ENCODE measurements at regions of chr20 and their contacts with region 1.

Region 1: DNA sequence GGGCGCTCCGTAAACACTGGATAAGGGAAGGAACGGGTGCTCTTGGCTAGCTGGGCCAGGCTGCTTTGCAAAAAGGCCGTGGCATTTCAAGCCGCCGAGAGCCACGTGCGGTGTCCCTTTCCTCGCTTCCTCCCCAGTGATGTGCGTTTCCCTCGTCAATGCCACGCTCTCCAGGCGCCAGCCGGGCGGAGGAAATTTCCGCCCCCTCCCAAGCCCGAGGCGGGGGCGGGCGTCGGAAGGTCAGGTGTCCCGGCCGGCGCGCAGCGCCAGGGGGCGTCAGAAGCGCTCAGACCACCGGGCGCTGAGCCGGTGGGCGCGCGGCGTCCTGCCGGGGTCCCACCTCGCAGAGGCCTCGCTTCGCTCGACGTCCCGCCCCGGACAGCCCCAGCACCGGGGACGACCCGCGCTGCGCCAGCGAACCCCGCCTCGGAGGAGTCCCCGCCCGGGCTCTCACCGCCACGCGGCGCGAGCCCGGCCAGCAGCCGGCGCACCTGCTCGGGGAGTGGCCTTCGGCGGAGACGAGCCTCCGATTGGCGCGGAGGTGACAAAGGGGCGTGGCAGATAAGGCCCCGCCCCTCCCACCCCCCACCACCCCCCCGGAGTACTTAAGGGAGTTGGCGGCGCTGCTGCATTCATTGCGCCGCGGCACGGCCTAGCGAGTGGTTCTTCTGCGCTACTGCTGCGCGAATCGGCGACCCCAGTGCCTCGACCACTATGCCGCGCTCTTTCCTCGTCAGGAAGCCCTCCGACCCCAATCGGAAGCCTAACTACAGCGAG is at the start of gene SNAI1:
- DNase-seq: peak; percentile 98
- H3K4me3 ChIP-seq: peak within 1 kb of the TSS; percentile 76 to 80
- H3K27ac ChIP-seq: peak within 1 kb of the TSS; percentile 43 to 76; a peak in 3 of 4 replicates
- H3K4me1 ChIP-seq: peaks cover 11 to 40% of the 10 kb centered on the region in 2 experiments; a peak in 3 of 4 replicates
- H3K27me3 ChIP-seq: no peaks in the 10 kb centered on the region
- CTCF ChIP-seq: peak; percentile 61
- EP300 ChIP-seq: no peak
- RAD21 ChIP-seq: peak; percentile 46
- polyA plus RNA-seq, gene SNAI1: 3.7 and 6.2 TPM in 2 replicates

Region 2: DNA sequence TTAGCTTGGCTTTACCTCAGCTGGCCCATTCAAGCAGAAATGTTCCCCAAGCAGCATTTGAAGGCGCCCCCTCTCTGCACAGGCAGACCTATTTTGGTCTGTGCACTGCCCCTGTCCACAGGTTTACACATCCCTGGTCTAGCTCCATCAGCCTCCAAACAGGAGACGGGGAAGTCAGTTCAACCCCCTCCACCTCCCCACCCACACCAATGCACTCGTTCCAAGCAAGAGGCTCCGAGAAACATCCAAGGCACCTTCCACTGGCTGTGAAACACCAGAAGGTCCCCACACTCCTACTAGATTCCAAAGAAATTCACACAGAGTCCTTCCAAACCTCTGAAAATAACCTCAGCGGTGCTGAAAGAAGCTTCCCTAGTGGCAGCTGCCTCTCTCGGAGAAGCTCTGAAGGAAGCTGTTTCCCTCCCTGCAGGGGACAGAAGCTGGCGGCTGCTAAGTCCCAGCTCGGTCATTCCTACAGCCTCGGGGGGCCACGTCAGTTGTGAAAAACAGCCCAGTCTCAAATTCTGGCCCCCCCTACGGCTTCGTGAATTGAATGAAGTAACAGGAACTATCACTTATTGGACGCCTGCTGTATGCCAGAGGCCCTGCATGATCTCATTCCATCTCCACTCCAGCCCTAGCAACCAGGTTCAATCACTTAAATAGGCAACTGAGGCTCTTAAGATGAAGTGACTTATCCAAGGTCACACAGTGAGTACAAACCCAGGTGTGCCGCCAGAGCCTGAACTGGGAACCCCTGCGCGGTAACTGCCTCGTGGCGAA is 68.0 kb before region 1 on chr20:
- CTCF ChIA-PET with region 1: interaction called, 11 read pairs
- POLR2A ChIA-PET with region 1: no interaction called
- DNase-seq: no peak
- H3K4me3 ChIP-seq: peak overlapping the region; percentile 89 to 97
- H3K27ac ChIP-seq: peak overlapping the region; percentile 98 to 100; a peak in 3 of 4 replicates
- H3K4me1 ChIP-seq: peaks cover 0 to 19% of the 10 kb centered on the region in 2 experiments; a peak in 1 of 4 replicates
- H3K27me3 ChIP-seq: no peaks in the 10 kb centered on the region
- CTCF ChIP-seq: no peak
- EP300 ChIP-seq: no peak
- RAD21 ChIP-seq: no peak

Region 3: GRCh38 chr20:49964964-49965780 is 17.4 kb before region 1 on chr20:
- CTCF ChIA-PET with region 1: interaction called, 49 read pairs
- POLR2A ChIA-PET with region 1: interaction called, 6 read pairs
- DNase-seq: peak; percentile 78
- H3K4me3 ChIP-seq: no peak overlapping the region; a peak in 1 of 4 replicates
- H3K27ac ChIP-seq: no peak overlapping the region
- H3K4me1 ChIP-seq: peaks cover 0 to 2% of the 10 kb centered on the region in 2 experiments; a peak in 1 of 4 replicates
- H3K27me3 ChIP-seq: no peaks in the 10 kb centered on the region
- CTCF ChIP-seq: peak; percentile 72
- EP300 ChIP-seq: no peak
- RAD21 ChIP-seq: peak; percentile 29; the same call in 1 of the 2 replicates

Region 4: DNA sequence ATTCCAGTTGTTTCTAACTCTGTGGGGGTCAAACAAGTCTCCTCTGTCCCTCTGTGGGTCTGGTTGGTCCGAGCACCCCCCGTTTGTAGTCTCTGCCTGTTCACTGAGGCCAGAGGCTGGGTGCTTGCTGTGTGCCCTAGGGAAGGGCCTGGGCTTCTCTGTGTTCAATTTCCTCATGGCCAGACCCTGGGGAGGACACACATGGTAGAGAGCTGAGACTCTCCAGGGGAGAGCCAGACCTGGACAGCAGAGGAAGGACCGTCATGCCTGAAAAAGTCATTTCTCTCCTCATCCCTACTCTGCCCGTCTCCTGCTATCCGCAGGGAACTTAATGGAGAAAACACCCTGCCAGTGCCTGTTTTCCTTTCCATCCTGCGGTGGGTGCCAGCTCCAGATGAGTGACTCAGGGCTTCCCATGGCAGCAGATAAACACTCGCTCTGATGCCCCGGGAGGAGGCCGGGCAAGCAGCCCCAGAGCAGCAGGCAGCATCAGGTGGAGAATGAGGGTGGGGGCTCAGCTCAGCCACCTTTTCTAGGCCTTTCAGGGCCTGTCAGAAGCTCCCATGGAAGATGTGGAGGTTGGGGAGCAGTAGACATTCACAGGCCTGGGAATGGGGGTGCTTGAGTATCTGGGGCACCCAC is 52.2 kb after region 1 on chr20:
- CTCF ChIA-PET with region 1: interaction called, 42 read pairs
- POLR2A ChIA-PET with region 1: interaction called, 6 read pairs
- DNase-seq: peak; percentile 55
- H3K4me3 ChIP-seq: no peak overlapping the region
- H3K27ac ChIP-seq: peak overlapping the region; percentile 8 to 97; a peak in 3 of 4 replicates
- H3K4me1 ChIP-seq: peaks cover 25 to 27% of the 10 kb centered on the region in 2 experiments; a peak in 3 of 4 replicates
- H3K27me3 ChIP-seq: no peaks in the 10 kb centered on the region
- CTCF ChIP-seq: no peak
- EP300 ChIP-seq: no peak
- RAD21 ChIP-seq: no peak

Region 5: GRCh38 chr20:50079788-50080187 is 97.3 kb after region 1 on chr20:
- CTCF ChIA-PET with region 1: interaction called, 807 read pairs
- POLR2A ChIA-PET with region 1: interaction called, 3 read pairs
- DNase-seq: no peak
- H3K4me3 ChIP-seq: no peak overlapping the region
- H3K27ac ChIP-seq: no peak overlapping the region
- H3K4me1 ChIP-seq: peaks cover 0 to 2% of the 10 kb centered on the region in 2 experiments; a peak in 1 of 4 replicates
- H3K27me3 ChIP-seq: no peaks in the 10 kb centered on the region
- CTCF ChIP-seq: no peak
- EP300 ChIP-seq: no peak
- RAD21 ChIP-seq: no peak

Region 6: GRCh38 chr20:50120897-50121693 is 138.6 kb after region 1 on chr20:
- CTCF ChIA-PET with region 1: interaction called, 44 read pairs
- POLR2A ChIA-PET with region 1: no interaction called
- DNase-seq: peak; percentile 83
- H3K4me3 ChIP-seq: no peak overlapping the region; a peak in 1 of 4 replicates
- H3K27ac ChIP-seq: no peak overlapping the region
- H3K4me1 ChIP-seq: peaks cover 3 to 4% of the 10 kb centered on the region in 2 experiments; a peak in 2 of 4 replicates
- H3K27me3 ChIP-seq: no peaks in the 10 kb centered on the region
- CTCF ChIP-seq: peak; percentile 80
- EP300 ChIP-seq: no peak
- RAD21 ChIP-seq: peak; percentile 97